ENCODE measurements at regions of chr19 and their contacts with region 1.

Region 1: GRCh38 chr19:44845612-44846454 is at the start of gene NECTIN2:
- DNase-seq: peak; percentile 100
- H3K4me3 ChIP-seq: peak within 1 kb of the TSS; percentile 99 to 100
- H3K27ac ChIP-seq: peak within 1 kb of the TSS; percentile 99 to 100
- H3K4me1 ChIP-seq: peaks cover 11% of the 10 kb centered on the region
- H3K27me3 ChIP-seq: no peaks in the 10 kb centered on the region
- CTCF ChIP-seq: peak; percentile 39 to 91 (median 74)
- POLR2A ChIP-seq: peak; percentile 97
- total RNA-seq, gene NECTIN2: 223 to 279 TPM

Region 2: DNA sequence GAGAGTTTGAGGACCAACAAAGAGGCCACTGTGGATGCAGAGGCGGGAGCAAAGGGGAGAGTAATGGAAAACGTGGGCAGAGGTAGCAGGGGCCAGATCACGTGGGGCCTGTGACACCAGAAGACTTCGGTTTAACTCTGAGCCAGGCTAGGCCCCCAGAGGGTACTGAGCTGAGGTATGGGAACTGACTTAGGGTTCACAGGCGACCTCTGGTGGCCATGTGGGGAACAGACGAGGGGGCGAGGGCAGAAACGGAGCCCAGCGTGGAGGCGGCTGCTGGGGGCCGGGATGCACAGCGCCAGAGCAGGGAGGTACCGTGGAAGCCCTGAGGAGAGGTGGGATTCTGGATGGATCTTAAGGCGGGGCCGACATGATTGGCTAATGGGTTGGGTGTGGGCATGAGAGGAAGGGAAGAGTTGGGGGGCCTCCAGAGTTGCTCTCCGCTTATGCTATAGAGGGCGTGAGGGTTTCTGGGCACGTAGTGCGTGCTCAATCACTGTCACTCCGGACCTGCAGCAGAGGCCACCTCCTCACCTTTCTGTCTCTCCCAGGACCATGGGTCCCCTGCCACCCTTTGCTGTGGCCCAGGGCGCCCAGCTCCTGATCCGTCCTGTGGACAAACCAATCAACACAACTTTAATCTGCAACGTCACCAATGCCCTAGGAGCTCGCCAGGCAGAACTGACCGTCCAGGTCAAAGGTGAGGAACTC is 188.5 kb before region 1 on chr19:
- intact Hi-C with region 1: no loop called
- DNase-seq: peak; percentile 17
- H3K4me3 ChIP-seq: no peak overlapping the region
- H3K27ac ChIP-seq: no peak overlapping the region
- H3K4me1 ChIP-seq: no peaks in the 10 kb centered on the region
- H3K27me3 ChIP-seq: no peaks in the 10 kb centered on the region
- CTCF ChIP-seq: peak; percentile 53 to 86 (median 72)
- POLR2A ChIP-seq: no peak

Region 3: GRCh38 chr19:44764975-44765948 is 80.6 kb before region 1 on chr19:
- intact Hi-C with region 1: no loop called
- DNase-seq: no peak
- H3K4me3 ChIP-seq: no peak overlapping the region
- H3K27ac ChIP-seq: no peak overlapping the region
- H3K4me1 ChIP-seq: no peaks in the 10 kb centered on the region
- H3K27me3 ChIP-seq: no peaks in the 10 kb centered on the region
- CTCF ChIP-seq: no peak
- POLR2A ChIP-seq: no peak

Region 4: DNA sequence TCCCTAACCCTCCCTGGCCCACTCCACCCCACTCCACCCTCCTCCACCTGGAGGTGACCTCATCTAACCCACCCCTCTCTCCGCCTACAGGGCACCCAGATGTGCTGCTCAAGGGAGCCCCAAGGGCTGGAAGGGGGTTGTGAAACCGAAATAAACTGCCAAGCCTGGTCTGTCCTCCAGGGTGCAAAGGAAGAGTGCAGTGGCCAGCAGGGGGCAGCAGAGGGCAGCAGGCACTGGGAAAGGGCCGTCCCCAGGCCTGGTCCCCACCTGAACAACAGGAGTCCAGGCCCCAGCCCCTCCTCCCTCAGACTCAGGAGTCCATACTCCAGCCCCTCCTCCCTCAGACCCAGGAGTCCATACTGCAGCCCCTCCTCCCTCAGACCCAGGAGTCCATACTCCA is 45.4 kb before region 1 on chr19:
- intact Hi-C with region 1: loop called (anchors 1 kb)
- DNase-seq: peak; percentile 85
- H3K4me3 ChIP-seq: no peak overlapping the region
- H3K27ac ChIP-seq: peak overlapping the region in 1 of 2 donors; percentile 35
- H3K4me1 ChIP-seq: peaks cover 17% of the 10 kb centered on the region
- H3K27me3 ChIP-seq: no peaks in the 10 kb centered on the region
- CTCF ChIP-seq: peak; percentile 90 to 98 (median 96)
- POLR2A ChIP-seq: no peak

Region 5: DNA sequence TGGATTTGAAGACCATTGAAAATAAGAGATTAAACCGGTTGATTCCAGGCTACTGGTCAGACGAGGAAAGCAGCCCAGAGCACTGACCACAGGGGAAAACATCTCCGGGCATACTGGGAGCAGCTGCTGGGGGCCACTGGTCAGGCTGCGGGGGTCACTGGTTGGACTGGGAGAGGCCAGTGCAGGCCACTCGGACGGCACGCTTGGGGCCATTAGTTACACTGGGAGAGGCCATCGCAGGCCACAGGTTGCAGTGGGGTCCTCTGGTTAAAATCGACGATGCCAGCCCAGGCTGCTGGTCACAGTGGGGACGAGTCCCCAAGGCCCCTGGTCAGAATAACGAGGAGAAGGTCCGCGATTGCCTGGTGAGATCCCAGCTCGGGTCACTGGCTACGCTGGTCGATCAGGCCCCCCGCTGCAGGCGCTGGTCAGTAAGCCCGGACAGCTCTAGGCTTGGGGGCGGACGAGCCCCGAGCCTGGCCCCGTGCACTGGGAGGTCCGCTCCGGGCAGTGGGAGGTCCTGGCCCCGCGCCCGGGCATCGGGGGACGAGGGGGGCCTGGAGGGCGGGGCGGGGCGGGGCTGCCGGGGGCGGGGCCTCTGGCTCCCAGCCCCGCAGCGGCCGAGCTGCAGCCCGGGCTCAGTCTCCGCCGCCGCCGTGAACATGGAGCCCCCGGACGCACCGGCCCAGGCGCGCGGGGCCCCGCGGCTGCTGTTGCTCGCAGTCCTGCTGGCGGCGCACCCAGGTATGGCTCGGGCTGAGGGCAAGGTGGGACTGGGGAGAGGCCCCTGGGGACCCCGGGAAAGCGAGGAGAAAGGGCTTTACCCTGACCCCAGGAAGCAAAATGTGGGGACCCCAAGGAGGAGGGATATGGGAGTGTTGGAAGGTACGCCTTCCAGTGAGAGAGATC is 37.1 kb before region 1 on chr19 and contains the start of gene BCAM:
- intact Hi-C with region 1: loop called (anchors 2 kb)
- DNase-seq: peak; percentile 71
- H3K4me3 ChIP-seq: peak within 1 kb of the TSS; percentile 66 to 72
- H3K27ac ChIP-seq: peak within 1 kb of the TSS; percentile 89 to 90
- H3K4me1 ChIP-seq: peaks cover 22% of the 10 kb centered on the region
- H3K27me3 ChIP-seq: no peaks in the 10 kb centered on the region
- CTCF ChIP-seq: peak in 1 of 4 experiments; percentile 8
- POLR2A ChIP-seq: peak; percentile 61
- total RNA-seq, gene BCAM: 258 to 501 TPM

Region 6: DNA sequence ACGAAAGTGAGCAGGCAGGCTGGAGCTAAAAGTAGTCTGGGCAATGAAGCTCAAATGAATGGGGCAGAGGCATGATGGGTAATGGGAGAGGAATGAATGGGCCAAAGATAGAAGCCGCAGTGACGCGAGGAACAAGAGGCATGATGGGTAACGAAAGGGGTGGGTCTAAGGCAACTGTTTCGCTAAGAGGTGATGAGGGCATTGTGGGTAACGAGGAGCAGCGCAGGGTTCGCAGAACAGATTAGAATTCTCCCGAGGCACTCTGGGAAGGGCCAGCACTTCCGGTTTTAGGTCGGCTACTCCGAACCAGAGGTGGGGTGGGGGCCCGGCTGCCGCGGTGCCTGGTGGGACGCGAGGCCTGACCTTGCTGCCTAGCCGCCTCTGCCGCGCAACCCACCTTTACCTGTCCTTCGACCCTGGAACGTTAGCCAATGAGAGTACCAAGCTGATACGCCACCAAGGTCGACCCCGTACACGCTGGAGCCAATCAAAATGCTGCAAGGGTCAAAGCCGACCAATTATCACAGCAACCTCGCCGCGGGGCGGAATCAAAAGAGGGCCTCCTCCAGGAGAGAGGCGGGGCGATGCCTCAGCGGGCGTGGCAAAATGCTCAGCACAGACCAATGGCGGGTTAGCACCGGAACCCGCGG is 44.7 kb after region 1 on chr19:
- intact Hi-C with region 1: loop called (anchors 2 kb)
- DNase-seq: peak; percentile 100
- H3K4me3 ChIP-seq: peak overlapping the region; percentile 39 to 52
- H3K27ac ChIP-seq: peak overlapping the region; percentile 93
- H3K4me1 ChIP-seq: peaks cover 16% of the 10 kb centered on the region
- H3K27me3 ChIP-seq: no peaks in the 10 kb centered on the region
- CTCF ChIP-seq: no peak
- POLR2A ChIP-seq: peak; percentile 41

Region 7: DNA sequence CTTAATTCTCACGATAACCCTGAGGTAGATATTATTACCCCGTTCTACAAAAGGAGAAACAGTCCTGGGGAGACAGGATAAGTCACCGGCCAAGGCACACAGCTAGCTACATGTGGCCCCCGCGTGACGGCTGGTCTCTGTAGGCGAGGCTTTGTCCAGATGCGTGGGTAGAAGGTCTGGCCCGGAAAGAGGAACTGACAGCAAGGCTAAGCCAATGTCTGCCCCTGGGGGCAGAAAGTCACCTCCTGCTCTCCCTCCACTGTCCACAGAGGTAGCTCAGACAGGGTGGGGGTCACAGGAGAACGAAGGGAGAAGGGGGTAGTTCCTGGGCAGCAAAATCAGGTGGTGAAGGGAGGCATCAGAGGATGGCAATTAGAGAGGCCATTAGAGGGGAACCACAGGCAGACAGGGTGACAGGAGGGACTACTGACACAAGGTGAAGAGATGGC is 98.0 kb after region 1 on chr19:
- intact Hi-C with region 1: no loop called
- DNase-seq: no peak
- H3K4me3 ChIP-seq: no peak overlapping the region
- H3K27ac ChIP-seq: no peak overlapping the region
- H3K4me1 ChIP-seq: no peaks in the 10 kb centered on the region
- H3K27me3 ChIP-seq: no peaks in the 10 kb centered on the region
- CTCF ChIP-seq: no peak
- POLR2A ChIP-seq: no peak

Region 8: GRCh38 chr19:44954824-44955586 is 109.2 kb after region 1 on chr19 and contains the start of gene CLPTM1:
- intact Hi-C with region 1: loop called (anchors 5 kb)
- DNase-seq: peak; percentile 95
- H3K4me3 ChIP-seq: peak within 1 kb of the TSS; percentile 85 to 99
- H3K27ac ChIP-seq: peak within 1 kb of the TSS; percentile 95 to 97
- H3K4me1 ChIP-seq: peaks cover 7% of the 10 kb centered on the region
- H3K27me3 ChIP-seq: no peaks in the 10 kb centered on the region
- CTCF ChIP-seq: peak in 1 of 4 experiments; percentile 29
- POLR2A ChIP-seq: peak; percentile 65
- total RNA-seq, gene CLPTM1: 102 to 185 TPM

Region 9: GRCh38 chr19:45092747-45093678 is 247.2 kb after region 1 on chr19 and contains the start of gene PPP1R37:
- intact Hi-C with region 1: no loop called
- DNase-seq: peak; percentile 92
- H3K4me3 ChIP-seq: peak within 1 kb of the TSS; percentile 84 to 99
- H3K27ac ChIP-seq: peak within 1 kb of the TSS; percentile 83 to 88
- H3K4me1 ChIP-seq: peaks cover 22% of the 10 kb centered on the region
- H3K27me3 ChIP-seq: no peaks in the 10 kb centered on the region
- CTCF ChIP-seq: peak in 3 of 4 experiments; percentile 12 to 61 (median 60)
- POLR2A ChIP-seq: peak; percentile 50
- total RNA-seq, gene PPP1R37: 50.1 to 90.3 TPM

Measured in prostate gland (tissue), 2 donors.